A549 (cell line): ENCODE measurements at regions of chr2 and their contacts with region 1.

Region 1: DNA sequence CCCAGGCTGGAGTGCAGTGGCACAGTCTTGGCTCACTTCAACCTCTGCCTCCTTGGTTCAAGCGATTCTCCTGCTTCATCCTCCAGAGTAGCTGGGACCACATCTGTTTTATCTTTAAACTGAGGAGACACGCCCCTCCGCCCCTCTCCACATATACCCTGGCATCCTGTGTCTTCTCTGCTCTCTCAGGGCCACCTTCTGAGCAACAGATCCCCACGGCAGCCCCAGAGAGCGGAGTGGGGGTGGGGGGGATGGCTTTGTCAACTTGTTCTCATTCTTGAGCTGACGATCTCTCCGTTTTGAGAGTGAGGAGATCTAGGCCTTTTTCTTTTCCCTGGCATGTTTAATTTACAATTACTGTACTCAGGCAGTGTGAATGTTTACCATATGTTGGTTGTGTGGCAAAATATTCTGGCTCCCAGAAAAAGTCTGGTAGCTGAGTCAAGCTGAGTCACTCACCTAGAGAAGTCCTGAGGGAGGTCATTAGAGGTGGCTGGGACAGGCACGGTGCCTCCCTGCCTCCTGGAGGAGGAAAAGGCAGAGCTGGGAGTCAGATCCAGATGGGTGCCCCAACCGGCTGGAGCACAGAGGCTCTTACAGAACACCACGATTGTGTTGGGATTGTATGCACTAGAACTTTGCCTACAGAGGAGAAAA is 19.5 kb upstream of the ID2 start:
- DNase-seq: peak; percentile 82 to 91
- ATAC-seq: peak; percentile 93 to 96
- H3K4me3 ChIP-seq: no peak overlapping the region
- H3K27ac ChIP-seq: peak overlapping the region; percentile 82 to 89
- H3K4me1 ChIP-seq: peaks cover 27% of the 10 kb centered on the region
- CTCF ChIP-seq: peak; percentile 34; the same call in 2 of the 3 replicates
- EP300 ChIP-seq: peak in 1 of 2 experiments; percentile 40; a peak in 1 of 5 replicates
- POLR2A ChIP-seq: no peak
- RAD21 ChIP-seq: peak; percentile 72 to 83

Region 2: DNA sequence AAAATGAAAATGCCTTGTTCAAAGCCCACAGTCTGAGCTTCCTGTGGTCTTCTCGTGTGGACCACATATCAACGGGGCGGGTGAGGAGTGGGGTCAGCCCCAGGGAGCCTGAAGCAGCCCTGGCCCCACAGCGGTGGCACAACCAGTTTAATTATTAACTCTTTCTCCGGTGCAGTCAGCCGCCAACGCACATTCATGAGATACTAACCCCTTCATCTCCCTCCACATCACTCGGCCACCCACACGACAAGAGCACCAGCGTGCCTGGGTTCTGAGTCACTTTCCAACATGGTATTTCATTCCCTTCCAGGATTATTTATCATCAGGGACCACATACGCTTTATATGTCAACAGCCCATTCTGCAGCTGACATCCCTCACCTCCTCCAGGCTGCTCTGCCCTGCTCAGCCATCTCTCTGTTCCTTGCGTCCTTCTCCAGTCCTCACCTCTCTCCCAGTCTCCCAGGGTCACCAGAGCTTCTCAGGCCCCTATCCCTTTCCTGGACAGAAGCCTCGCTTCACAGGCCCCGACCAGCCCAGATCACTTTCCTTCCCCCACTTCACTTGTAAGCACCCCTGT is 28.5 kb before region 1 on chr2:
- CTCF ChIA-PET with region 1: interaction called, 10 read pairs
- POLR2A ChIA-PET with region 1: interaction called, 3 read pairs
- DNase-seq: peak; percentile 97 to 98
- ATAC-seq: peak; percentile 91 to 93
- H3K4me3 ChIP-seq: peak overlapping the region; percentile 11; the same call in 1 of the 3 replicates
- H3K27ac ChIP-seq: peak overlapping the region; percentile 92 to 94
- H3K4me1 ChIP-seq: peaks cover 77% of the 10 kb centered on the region
- CTCF ChIP-seq: no peak
- EP300 ChIP-seq: peak; percentile 98 to 99
- POLR2A ChIP-seq: no peak
- RAD21 ChIP-seq: peak; percentile 35 to 80; a peak in 4 of 5 replicates

Region 3: DNA sequence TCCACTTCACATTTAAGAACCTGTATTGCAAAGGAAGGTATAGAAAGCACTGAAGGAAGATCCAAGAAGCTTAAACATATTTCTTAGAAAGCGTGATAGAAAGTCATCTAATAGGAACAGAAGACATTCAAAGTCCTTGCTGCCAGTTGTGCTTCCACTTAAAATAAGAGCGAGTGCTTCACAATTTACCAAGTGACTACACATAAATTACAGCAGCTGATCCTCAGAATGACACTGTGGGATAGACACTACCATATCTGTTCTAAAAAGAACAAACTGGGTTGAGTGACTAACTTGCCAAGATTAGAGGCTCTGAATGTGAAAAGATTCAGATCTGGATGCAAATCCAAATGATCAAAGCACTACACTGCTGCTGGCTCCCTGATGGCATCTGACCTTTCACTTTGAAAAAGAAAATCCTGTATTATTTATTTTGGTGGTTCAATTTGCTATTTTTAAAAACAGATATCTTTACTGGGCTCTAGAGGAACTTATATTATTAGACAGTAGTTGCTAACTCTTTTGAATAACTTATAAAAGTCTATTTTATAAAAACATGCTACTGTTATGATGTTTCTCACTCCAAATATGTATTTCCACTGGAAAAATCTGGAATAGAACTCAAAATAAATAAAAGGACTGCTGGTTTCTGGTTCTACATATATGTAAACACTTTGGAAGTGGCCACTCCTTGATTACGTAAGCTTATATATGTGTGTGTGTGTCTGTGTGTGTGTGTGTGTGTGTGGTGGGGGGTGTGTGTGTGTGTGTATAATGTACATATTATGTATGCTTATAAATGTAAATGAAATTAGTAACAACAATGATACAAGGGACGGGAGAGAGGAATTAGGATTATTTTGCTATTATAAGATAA is 117.7 kb after region 1 on chr2:
- CTCF ChIA-PET with region 1: no interaction called
- POLR2A ChIA-PET with region 1: no interaction called
- DNase-seq: no peak
- ATAC-seq: no peak
- H3K4me3 ChIP-seq: no peak overlapping the region
- H3K27ac ChIP-seq: no peak overlapping the region
- H3K4me1 ChIP-seq: no peaks in the 10 kb centered on the region
- CTCF ChIP-seq: no peak
- EP300 ChIP-seq: no peak
- POLR2A ChIP-seq: no peak
- RAD21 ChIP-seq: no peak

Region 4: GRCh38 chr2:8794923-8795825 is 132.8 kb after region 1 on chr2:
- CTCF ChIA-PET with region 1: no interaction called
- POLR2A ChIA-PET with region 1: no interaction called
- DNase-seq: no peak
- ATAC-seq: no peak
- H3K4me3 ChIP-seq: no peak overlapping the region
- H3K27ac ChIP-seq: no peak overlapping the region
- H3K4me1 ChIP-seq: no peaks in the 10 kb centered on the region
- CTCF ChIP-seq: no peak
- EP300 ChIP-seq: no peak
- POLR2A ChIP-seq: no peak
- RAD21 ChIP-seq: no peak